ENCODE measurements at regions of chr15 and their contacts with region 1.

Region 1: GRCh38 chr15:31265871-31266711 is 60.5 kb upstream of the KLF13 start:
- DNase-seq: peak; percentile 80
- ATAC-seq: peak; percentile 64
- H3K4me3 ChIP-seq: peak overlapping the region in 4 of 5 experiments; percentile 2 to 37 (median 4)
- H3K4me3 Mint-ChIP-seq: peak overlapping the region; percentile 79
- H3K27ac ChIP-seq: peak overlapping the region; percentile 78 to 90
- H3K27ac Mint-ChIP-seq: peak overlapping the region; percentile 96
- H3K4me1 ChIP-seq: peaks cover 70 to 79% of the 10 kb centered on the region in 2 donors
- H3K4me1 Mint-ChIP-seq: peaks cover 79% of the 10 kb centered on the region
- H3K27me3 ChIP-seq: no peaks in the 10 kb centered on the region
- H3K27me3 Mint-ChIP-seq: no peaks in the 10 kb centered on the region
- CTCF ChIP-seq: no peak

Region 2: GRCh38 chr15:31228985-31229826 is 36.9 kb before region 1 on chr15:
- CTCF ChIA-PET with region 1: interaction called, 60 read pairs
- POLR2A ChIA-PET with region 1: interaction called, 40 read pairs
- intact Hi-C with region 1: loop called (anchors 1 kb)
- DNase-seq: peak; percentile 68
- ATAC-seq: peak; percentile 46
- H3K4me3 ChIP-seq: peak overlapping the region; percentile 19 to 63 (median 43)
- H3K4me3 Mint-ChIP-seq: peak overlapping the region; percentile 89
- H3K27ac ChIP-seq: peak overlapping the region; percentile 11 to 68
- H3K27ac Mint-ChIP-seq: peak overlapping the region; percentile 92
- H3K4me1 ChIP-seq: peaks cover 72 to 86% of the 10 kb centered on the region in 2 donors
- H3K4me1 Mint-ChIP-seq: peaks cover 86% of the 10 kb centered on the region
- H3K27me3 ChIP-seq: no peaks in the 10 kb centered on the region
- H3K27me3 Mint-ChIP-seq: no peaks in the 10 kb centered on the region
- CTCF ChIP-seq: no peak

Region 3: GRCh38 chr15:31254431-31255175 is 11.5 kb before region 1 on chr15:
- CTCF ChIA-PET with region 1: interaction called, 5 read pairs
- POLR2A ChIA-PET with region 1: interaction called, 26 read pairs
- intact Hi-C with region 1: no loop called
- DNase-seq: no peak
- ATAC-seq: no peak
- H3K4me3 ChIP-seq: no peak overlapping the region
- H3K4me3 Mint-ChIP-seq: peak overlapping the region; percentile 57
- H3K27ac ChIP-seq: no peak overlapping the region
- H3K27ac Mint-ChIP-seq: no peak overlapping the region
- H3K4me1 ChIP-seq: peaks cover 33 to 34% of the 10 kb centered on the region in 2 donors
- H3K4me1 Mint-ChIP-seq: peaks cover 36% of the 10 kb centered on the region
- H3K27me3 ChIP-seq: no peaks in the 10 kb centered on the region
- H3K27me3 Mint-ChIP-seq: no peaks in the 10 kb centered on the region
- CTCF ChIP-seq: no peak

Region 4: GRCh38 chr15:31302778-31303725 is 37.0 kb after region 1 on chr15:
- CTCF ChIA-PET with region 1: interaction called, 8 read pairs
- POLR2A ChIA-PET with region 1: interaction called, 10 read pairs
- intact Hi-C with region 1: loop called (anchors 5 kb)
- DNase-seq: peak; percentile 35
- ATAC-seq: peak; percentile 43
- H3K4me3 ChIP-seq: no peak overlapping the region
- H3K4me3 Mint-ChIP-seq: no peak overlapping the region
- H3K27ac ChIP-seq: no peak overlapping the region
- H3K27ac Mint-ChIP-seq: peak overlapping the region; percentile 26
- H3K4me1 ChIP-seq: peaks cover 30 to 53% of the 10 kb centered on the region in 2 donors
- H3K4me1 Mint-ChIP-seq: peaks cover 50% of the 10 kb centered on the region
- H3K27me3 ChIP-seq: no peaks in the 10 kb centered on the region
- H3K27me3 Mint-ChIP-seq: no peaks in the 10 kb centered on the region
- CTCF ChIP-seq: peak; percentile 12

Region 5: DNA sequence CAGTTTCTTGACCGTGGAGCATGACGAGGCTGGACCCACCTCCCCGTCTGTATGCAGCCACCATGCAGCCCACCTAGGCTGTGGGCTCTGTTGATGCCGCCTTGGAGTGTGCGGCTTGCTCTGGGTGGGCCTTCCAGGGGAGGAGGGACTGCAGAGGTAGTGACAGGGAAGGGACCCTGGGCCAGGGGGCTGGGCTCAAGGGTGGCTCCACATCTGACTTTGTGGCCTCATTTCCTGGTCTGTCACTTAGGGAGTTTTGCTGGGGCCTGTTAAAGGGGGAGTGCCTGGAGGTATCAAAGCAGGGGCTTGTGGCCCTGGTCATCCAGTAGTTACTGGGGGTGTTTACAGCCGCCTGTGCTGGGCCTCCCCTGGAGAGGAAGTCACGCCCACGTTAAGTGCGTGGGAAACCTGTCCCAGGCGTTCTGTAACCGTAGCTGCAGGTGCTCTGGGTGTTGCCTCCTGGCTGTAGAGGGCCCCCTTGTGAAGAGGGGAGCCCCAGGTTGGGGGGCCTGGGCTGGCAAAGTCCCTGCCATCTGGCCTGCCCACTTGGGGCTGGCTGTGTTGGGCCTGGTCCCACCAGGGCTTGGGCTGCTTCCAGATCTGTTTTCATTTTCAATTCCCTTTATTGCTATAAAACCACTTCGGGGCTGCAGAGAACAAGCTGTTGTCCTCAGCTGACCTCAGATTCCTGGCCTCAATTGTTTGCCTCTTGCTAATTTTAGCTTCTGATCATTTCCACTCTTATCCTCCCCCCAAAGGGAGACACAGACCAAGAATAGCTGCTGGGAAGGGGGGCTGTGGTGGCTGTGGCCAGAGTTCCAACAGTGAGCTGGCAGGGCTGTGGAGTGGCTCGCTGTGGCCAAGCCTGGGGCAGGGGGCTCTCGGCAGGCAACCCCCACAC is 87.1 kb after region 1 on chr15:
- CTCF ChIA-PET with region 1: interaction called, 4 read pairs
- POLR2A ChIA-PET with region 1: interaction called, 11 read pairs
- intact Hi-C with region 1: no loop called
- DNase-seq: peak; percentile 87
- ATAC-seq: peak; percentile 82
- H3K4me3 ChIP-seq: peak overlapping the region in 4 of 5 experiments; percentile 10 to 58 (median 34)
- H3K4me3 Mint-ChIP-seq: peak overlapping the region; percentile 88
- H3K27ac ChIP-seq: peak overlapping the region; percentile 96 to 97
- H3K27ac Mint-ChIP-seq: peak overlapping the region; percentile 96
- H3K4me1 ChIP-seq: peaks cover 99 to 100% of the 10 kb centered on the region in 2 donors
- H3K4me1 Mint-ChIP-seq: peaks cover 97% of the 10 kb centered on the region
- H3K27me3 ChIP-seq: no peaks in the 10 kb centered on the region
- H3K27me3 Mint-ChIP-seq: no peaks in the 10 kb centered on the region
- CTCF ChIP-seq: no peak

Region 6: GRCh38 chr15:31472636-31473384 is 206.7 kb after region 1 on chr15:
- CTCF ChIA-PET with region 1: interaction called, 4 read pairs
- POLR2A ChIA-PET with region 1: no interaction called
- intact Hi-C with region 1: loop called (anchors 5 kb)
- DNase-seq: peak; percentile 79
- ATAC-seq: peak; percentile 88
- H3K4me3 ChIP-seq: peak overlapping the region in 4 of 5 experiments; percentile 37 to 61 (median 55)
- H3K4me3 Mint-ChIP-seq: peak overlapping the region; percentile 85
- H3K27ac ChIP-seq: peak overlapping the region; percentile 86 to 88
- H3K27ac Mint-ChIP-seq: peak overlapping the region; percentile 92
- H3K4me1 ChIP-seq: peaks cover 30 to 41% of the 10 kb centered on the region in 2 donors
- H3K4me1 Mint-ChIP-seq: peaks cover 51% of the 10 kb centered on the region
- H3K27me3 ChIP-seq: no peaks in the 10 kb centered on the region
- H3K27me3 Mint-ChIP-seq: no peaks in the 10 kb centered on the region
- CTCF ChIP-seq: no peak

Region 7: GRCh38 chr15:31615643-31616415 is 349.7 kb after region 1 on chr15:
- CTCF ChIA-PET with region 1: no interaction called
- POLR2A ChIA-PET with region 1: no interaction called
- intact Hi-C with region 1: no loop called
- DNase-seq: no peak
- ATAC-seq: no peak
- H3K4me3 ChIP-seq: no peak overlapping the region
- H3K4me3 Mint-ChIP-seq: no peak overlapping the region
- H3K27ac ChIP-seq: no peak overlapping the region
- H3K27ac Mint-ChIP-seq: no peak overlapping the region
- H3K4me1 ChIP-seq: no peaks in the 10 kb centered on the region
- H3K4me1 Mint-ChIP-seq: no peaks in the 10 kb centered on the region
- H3K27me3 ChIP-seq: no peaks in the 10 kb centered on the region
- H3K27me3 Mint-ChIP-seq: no peaks in the 10 kb centered on the region
- CTCF ChIP-seq: no peak

Measured in B cell (primary cell).